Breast epithelium (tissue), 4 donors: ENCODE measurements at regions of chr12 and their contacts with region 1.

Region 1: GRCh38 chr12:83793616-83794015 is 1106.9 kb downstream of the TMTC2 start:
- DNase-seq: no peak
- H3K4me3 ChIP-seq: no peak overlapping the region
- H3K27ac ChIP-seq: no peak overlapping the region
- H3K4me1 ChIP-seq: no peaks in the 10 kb centered on the region
- H3K27me3 ChIP-seq: no peaks in the 10 kb centered on the region
- CTCF ChIP-seq: no peak
- POLR2A ChIP-seq: no peak

Region 2: DNA sequence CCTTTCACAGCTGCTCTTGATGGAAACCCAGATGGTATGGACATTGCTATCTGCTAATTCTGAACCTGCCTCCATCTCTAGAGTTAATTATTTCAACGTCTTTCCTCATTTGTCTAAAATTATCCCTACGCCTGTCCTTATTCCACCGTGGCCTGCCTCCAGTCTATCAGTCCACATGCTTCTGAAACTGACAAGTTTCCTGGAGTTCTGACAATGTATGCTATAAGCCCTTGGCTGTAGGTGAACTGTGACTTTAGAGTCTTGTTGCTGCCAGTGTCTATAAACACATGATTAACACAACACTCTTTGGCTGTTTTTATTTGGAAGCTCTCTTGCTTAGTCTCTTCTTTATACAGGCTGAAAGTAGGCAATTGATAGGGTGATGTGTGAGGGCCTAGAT is 54.0 kb before region 1 on chr12:
- intact Hi-C with region 1: loop called (anchors 2 kb)
- DNase-seq: no peak
- H3K4me3 ChIP-seq: no peak overlapping the region
- H3K27ac ChIP-seq: no peak overlapping the region
- H3K4me1 ChIP-seq: no peaks in the 10 kb centered on the region
- H3K27me3 ChIP-seq: no peaks in the 10 kb centered on the region
- CTCF ChIP-seq: no peak
- POLR2A ChIP-seq: no peak